ENCODE measurements at regions of chrX and their contacts with region 1.

Region 1: DNA sequence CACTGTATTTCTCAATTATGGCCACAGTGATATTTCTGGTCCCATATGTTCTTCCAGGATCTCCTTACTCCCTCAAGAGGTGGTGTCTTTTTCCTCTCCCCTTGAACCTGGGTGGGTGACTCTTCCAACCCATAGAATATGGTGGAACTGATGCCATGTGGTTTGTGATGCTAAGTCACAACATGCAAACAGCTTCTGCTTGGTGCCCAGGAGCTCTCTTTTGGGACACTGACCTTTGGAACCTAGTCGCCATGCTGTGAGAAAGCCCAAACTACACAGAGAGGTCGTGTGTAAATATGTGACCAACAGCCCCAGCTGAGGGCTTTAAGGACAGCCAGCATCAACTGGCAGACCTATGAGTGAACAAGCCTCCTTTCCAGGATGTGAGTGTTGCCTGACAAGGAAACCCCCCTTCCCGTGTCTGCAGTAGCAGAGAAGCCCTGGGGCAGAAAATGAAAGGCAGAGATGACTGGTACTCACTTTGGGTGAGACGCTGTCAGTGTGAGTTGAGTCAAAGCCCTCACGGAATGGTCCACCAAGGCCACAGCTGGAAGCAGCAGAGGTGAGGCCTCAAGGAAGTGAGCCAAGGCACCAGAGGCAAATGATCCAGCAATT is 223.4 kb downstream of the BCOR start:
- DNase-seq: peak; percentile 88
- H3K4me3 Mint-ChIP-seq: no peak overlapping the region
- H3K27ac Mint-ChIP-seq: peak overlapping the region; percentile 93
- H3K4me1 Mint-ChIP-seq: peaks cover 51% of the 10 kb centered on the region
- H3K27me3 Mint-ChIP-seq: peaks cover 4% of the 10 kb centered on the region

Region 2: GRCh38 chrX:39149761-39150160 is 724.5 kb before region 1 on chrX:
- CTCF ChIA-PET with region 1: no interaction called
- POLR2A ChIA-PET with region 1: no interaction called
- intact Hi-C with region 1: no loop called
- DNase-seq: peak; percentile 70
- H3K4me3 Mint-ChIP-seq: no peak overlapping the region
- H3K27ac Mint-ChIP-seq: no peak overlapping the region
- H3K4me1 Mint-ChIP-seq: no peaks in the 10 kb centered on the region
- H3K27me3 Mint-ChIP-seq: no peaks in the 10 kb centered on the region

Region 3: DNA sequence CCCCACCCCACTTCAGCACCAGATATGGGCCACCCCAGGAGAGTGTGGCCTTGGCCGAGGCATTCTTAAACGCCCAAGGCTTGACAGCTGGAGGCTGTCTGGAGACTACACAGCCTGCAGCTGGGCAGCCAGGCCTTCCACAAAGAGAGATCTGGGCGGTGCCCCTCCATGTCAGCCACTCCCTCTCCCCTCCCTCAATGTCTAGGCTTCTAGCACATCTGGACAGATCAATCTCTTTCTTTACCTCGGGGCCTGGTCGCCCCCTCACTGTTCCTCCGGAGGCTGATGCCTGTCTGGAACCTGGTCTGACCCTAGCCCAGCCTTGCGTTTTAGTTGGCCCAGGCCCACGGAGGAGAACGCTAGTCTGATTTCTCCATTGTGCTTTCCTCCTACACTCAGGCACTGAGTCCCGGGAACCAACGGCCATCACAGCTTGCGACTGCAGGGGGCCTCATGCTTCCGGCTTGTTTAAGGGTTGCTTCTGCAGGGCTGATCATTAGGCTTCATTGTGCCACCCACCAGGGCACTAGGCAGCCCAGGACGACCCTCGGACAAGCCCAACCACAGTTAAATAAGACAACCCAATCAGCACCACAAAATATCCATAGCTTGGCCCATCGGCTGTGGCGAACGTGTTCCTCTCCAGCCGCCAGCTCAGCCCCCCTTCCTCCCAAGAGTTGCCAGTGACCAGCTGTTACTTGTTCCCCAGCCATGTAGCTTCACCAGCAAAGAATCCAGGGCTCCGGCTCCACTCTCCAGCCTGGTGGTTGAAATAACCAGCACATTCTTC is 22.8 kb after region 1 on chrX:
- CTCF ChIA-PET with region 1: no interaction called
- POLR2A ChIA-PET with region 1: no interaction called
- intact Hi-C with region 1: loop called (anchors 1 kb)
- DNase-seq: no peak
- H3K4me3 Mint-ChIP-seq: no peak overlapping the region
- H3K27ac Mint-ChIP-seq: no peak overlapping the region
- H3K4me1 Mint-ChIP-seq: no peaks in the 10 kb centered on the region
- H3K27me3 Mint-ChIP-seq: peaks cover 2% of the 10 kb centered on the region

Measured in activated CD4-positive, alpha-beta memory T cell treated with anti-CD3 and anti-CD28 coated beads for 36 hours (primary cell).